ENCODE measurements at regions of chr11 and their contacts with region 1.

Region 1: GRCh38 chr11:92340839-92341238 is 116.2 kb downstream of the FAT3 start:
- DNase-seq: peak; percentile 42 to 58
- H3K4me3 ChIP-seq: no peak overlapping the region
- H3K4me3 Mint-ChIP-seq: no peak overlapping the region
- H3K27ac Mint-ChIP-seq: no peak overlapping the region
- H3K4me1 ChIP-seq: no peaks in the 10 kb centered on the region
- H3K4me1 Mint-ChIP-seq: peaks cover 12% of the 10 kb centered on the region
- H3K27me3 ChIP-seq: no peaks in the 10 kb centered on the region
- H3K27me3 Mint-ChIP-seq: no peaks in the 10 kb centered on the region
- CTCF ChIP-seq: peak; percentile 55 to 59

Region 2: DNA sequence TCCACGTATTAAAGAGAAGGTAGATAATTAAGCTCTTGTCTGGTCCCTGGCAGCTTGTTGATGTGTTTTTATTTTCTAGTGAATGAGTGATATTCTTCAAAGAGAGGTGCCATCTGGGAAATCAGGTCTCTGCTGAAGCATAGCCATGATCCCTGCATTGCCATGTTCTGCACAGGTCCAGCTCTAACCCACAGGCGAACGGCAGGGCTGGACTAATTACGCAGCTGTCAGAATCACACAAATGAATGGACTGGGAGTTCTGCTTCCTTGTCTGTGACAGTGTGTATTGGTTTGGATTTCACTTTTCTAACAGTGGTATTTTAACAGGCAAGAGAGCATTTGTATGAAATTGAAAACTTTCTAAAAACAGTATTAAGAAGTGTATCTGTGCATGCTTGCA is 119.4 kb after region 1 on chr11:
- CTCF ChIA-PET with region 1: no interaction called
- POLR2A ChIA-PET with region 1: no interaction called
- intact Hi-C with region 1: loop called (anchors 5 kb)
- DNase-seq: no peak
- H3K4me3 ChIP-seq: no peak overlapping the region
- H3K4me3 Mint-ChIP-seq: no peak overlapping the region
- H3K27ac Mint-ChIP-seq: no peak overlapping the region
- H3K4me1 ChIP-seq: no peaks in the 10 kb centered on the region
- H3K4me1 Mint-ChIP-seq: no peaks in the 10 kb centered on the region
- H3K27me3 ChIP-seq: no peaks in the 10 kb centered on the region
- H3K27me3 Mint-ChIP-seq: no peaks in the 10 kb centered on the region
- CTCF ChIP-seq: no peak

Region 3: DNA sequence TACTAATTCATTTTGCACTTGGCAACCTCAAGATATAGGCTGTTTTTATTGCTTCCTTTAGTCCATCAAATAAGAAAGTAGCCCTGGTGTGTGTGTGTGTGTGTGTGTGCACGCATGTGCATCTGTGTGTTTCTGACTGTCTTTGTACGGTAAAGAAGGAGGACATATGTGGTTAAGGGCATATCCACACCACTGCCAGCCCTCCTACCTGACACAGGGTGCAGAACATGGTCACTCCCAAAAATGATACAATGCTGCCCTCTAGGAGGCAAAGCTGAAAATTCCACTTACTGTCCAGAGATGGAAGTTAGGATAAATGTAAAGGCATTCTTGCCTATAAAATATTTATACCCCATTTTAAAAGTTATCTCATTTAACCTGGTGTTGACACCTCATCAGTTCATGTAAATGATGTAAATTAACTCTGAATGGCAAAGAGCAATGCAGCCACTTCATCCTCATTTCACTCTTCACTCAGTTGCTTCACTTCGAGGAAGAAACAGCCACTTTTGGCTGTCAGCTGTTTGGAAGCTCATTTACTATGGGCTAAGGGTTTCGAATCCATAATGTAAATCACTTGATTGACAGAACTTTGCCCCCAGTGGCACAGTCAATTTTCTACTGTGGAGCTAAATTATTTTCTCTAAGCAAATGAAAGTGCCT is 545.5 kb after region 1 on chr11:
- CTCF ChIA-PET with region 1: no interaction called
- POLR2A ChIA-PET with region 1: no interaction called
- intact Hi-C with region 1: loop called (anchors 1 kb)
- DNase-seq: peak; percentile 68 to 77
- H3K4me3 ChIP-seq: no peak overlapping the region
- H3K4me3 Mint-ChIP-seq: no peak overlapping the region
- H3K27ac Mint-ChIP-seq: no peak overlapping the region
- H3K4me1 ChIP-seq: no peaks in the 10 kb centered on the region
- H3K4me1 Mint-ChIP-seq: no peaks in the 10 kb centered on the region
- H3K27me3 ChIP-seq: no peaks in the 10 kb centered on the region
- H3K27me3 Mint-ChIP-seq: peaks cover 13% of the 10 kb centered on the region
- CTCF ChIP-seq: peak; percentile 85 to 89